Prostate gland (tissue), 2 donors: ENCODE measurements at regions of chr16 and their contacts with region 1.

Region 1: DNA sequence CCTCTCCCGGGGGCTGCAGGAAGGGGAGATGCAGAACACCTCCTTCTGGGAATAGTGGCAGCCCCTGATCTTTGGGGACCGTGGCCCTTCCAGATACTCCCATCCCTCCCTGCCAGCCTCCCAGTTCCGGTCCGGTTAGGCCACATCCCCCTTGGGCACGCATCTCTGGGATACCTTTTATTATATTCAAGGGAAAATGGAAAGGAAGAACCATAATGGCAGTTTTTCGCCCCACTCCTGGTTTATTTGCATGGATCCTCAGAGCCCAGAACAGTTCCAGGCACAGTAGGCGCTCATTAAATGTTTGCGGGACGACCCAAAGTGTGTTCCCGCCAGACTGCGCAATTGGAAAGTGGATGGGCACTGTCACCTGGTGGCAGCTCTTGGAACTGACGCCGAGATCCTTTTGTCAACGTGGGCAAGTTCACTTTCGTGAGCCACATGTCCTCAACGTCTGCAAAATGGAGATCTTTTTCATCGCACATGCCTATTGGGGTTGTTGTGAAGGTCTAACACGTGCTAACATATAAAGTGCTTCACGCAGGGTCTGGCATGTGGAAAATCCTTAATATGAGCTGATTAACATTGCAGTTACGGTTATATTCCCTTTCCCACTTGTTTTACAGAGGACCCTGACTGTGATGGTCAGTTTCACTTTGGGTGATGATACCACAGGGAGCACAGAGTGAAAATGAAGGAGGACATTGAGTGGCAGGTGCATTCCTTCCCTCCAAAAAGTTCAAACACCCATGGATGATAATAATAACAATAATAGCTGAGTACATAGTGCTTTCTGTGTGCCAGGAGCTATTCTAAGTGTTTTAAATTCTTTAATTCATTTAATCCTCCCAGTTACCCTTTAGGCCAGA is 1.7 kb upstream of the GPRC5B start:
- DNase-seq: peak; percentile 58
- H3K4me3 ChIP-seq: no peak overlapping the region
- H3K27ac ChIP-seq: no peak overlapping the region
- H3K4me1 ChIP-seq: no peaks in the 10 kb centered on the region
- H3K27me3 ChIP-seq: no peaks in the 10 kb centered on the region
- CTCF ChIP-seq: peak; percentile 99 to 100 (median 99)
- POLR2A ChIP-seq: no peak

Region 2: DNA sequence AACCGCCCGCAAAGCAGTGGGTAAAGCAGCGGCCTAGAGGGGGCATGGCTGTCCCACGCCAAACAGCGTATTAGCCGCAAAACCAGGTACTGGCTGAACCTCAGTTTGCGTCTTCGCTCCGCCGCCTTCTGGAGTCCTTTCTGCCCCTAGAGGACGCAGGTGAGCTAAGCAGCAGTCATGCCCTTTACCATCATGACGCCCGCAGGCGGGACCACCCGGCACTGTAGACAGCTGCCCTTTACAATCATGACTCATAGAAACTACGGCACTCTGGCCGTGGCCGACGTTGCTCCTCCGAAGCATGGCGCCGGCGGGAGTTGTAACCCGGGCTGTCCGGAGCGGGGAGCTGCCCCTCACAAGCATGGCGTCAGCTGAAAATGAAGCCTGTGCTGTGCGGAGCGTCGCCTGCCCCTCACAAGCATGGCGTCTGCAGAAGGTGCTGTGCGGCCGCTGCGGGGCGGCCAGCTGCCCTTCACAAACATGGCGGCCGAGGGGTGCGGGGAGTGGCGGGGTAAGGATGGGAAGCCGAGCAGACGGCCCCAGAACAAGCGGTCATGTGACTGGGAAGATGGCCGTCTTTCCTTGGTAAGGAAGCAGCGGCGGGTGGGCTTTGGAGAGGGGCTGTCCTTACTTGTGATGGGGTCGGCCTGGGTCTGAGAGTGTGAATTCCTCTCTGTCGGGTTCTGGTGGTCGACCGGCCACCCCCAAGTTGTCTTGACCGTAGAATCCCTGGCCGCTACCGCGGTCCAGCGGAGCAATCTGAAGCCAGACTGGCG is 331.0 kb before region 1 on chr16 and contains the start of gene VPS35L:
- intact Hi-C with region 1: loop called (anchors 5 kb)
- DNase-seq: peak; percentile 90
- H3K4me3 ChIP-seq: peak within 1 kb of the TSS; percentile 48 to 60
- H3K27ac ChIP-seq: peak within 1 kb of the TSS; percentile 85
- H3K4me1 ChIP-seq: no peaks in the 10 kb centered on the region
- H3K27me3 ChIP-seq: no peaks in the 10 kb centered on the region
- CTCF ChIP-seq: peak; percentile 63 to 85 (median 74)
- POLR2A ChIP-seq: peak; percentile 50
- total RNA-seq, gene VPS35L: 58.8 to 74.0 TPM

Region 3: GRCh38 chr16:19717771-19718602 is 168.3 kb before region 1 on chr16 and contains the starts of genes IQCK and KNOP1:
- intact Hi-C with region 1: loop called (anchors 5 kb)
- DNase-seq: peak; percentile 84
- H3K4me3 ChIP-seq: peak within 1 kb of the TSS; percentile 95 to 98
- H3K27ac ChIP-seq: peak within 1 kb of the TSS; percentile 67 to 69
- H3K4me1 ChIP-seq: no peaks in the 10 kb centered on the region
- H3K27me3 ChIP-seq: no peaks in the 10 kb centered on the region
- CTCF ChIP-seq: peak in 1 of 4 experiments; percentile 17
- POLR2A ChIP-seq: no peak
- total RNA-seq, gene IQCK: 26.0 to 42.2 TPM
- total RNA-seq, gene KNOP1: 11.2 to 26.6 TPM